ENCODE measurements at regions of chr13 and their contacts with region 1.

Region 1: GRCh38 chr13:23466144-23467002 is 32.9 kb upstream of the SACS start:
- DNase-seq: no peak
- H3K4me3 ChIP-seq: peak overlapping the region; percentile 56
- CTCF ChIP-seq: peak; percentile 57

Region 2: DNA sequence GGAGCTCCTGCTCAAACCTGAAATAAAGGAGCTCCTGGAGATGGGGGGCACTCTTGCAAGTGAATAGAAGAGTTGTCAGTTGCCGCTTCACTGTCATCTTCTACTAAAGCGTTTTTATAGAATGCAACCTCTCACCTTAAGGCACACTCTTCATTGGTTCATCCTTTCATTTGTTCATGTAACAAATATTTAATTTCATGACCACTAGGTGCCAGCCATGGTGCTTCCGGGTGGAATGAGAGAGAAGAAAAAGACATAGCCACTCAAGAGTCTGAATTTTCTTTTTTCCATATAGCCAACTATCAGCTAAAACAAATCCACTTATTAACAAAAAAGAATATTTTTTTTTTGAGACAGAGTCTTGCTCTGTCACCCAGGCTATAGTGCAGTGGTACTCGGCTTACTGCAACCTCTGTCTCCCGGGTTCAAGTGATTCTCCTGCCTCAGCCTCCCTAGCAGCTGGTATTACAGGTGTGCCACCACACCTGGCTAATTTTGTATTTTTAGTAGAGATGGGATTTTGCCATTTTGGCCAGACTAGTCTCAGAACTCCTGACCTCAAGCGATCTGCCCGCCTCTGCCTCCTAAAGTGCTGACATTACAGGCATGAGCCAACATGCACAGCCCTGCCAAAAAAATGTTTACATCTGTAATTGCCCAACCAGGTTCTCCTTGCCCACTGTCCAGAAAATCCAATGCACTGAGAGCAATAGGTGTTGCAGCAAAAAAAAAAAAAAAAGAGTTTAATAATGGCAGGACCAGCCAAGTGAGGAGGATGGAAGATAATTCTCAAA is 10.8 kb before region 1 on chr13:
- CTCF ChIA-PET with region 1: interaction called, 29 read pairs
- POLR2A ChIA-PET with region 1: interaction called, 3 read pairs
- DNase-seq: no peak
- H3K4me3 ChIP-seq: no peak overlapping the region
- CTCF ChIP-seq: no peak

Region 3: GRCh38 chr13:23500849-23501248 is 34.5 kb after region 1 on chr13:
- CTCF ChIA-PET with region 1: interaction called, 4 read pairs
- POLR2A ChIA-PET with region 1: interaction called, 20 read pairs
- DNase-seq: peak; percentile 93
- H3K4me3 ChIP-seq: no peak overlapping the region
- CTCF ChIP-seq: no peak

Region 4: DNA sequence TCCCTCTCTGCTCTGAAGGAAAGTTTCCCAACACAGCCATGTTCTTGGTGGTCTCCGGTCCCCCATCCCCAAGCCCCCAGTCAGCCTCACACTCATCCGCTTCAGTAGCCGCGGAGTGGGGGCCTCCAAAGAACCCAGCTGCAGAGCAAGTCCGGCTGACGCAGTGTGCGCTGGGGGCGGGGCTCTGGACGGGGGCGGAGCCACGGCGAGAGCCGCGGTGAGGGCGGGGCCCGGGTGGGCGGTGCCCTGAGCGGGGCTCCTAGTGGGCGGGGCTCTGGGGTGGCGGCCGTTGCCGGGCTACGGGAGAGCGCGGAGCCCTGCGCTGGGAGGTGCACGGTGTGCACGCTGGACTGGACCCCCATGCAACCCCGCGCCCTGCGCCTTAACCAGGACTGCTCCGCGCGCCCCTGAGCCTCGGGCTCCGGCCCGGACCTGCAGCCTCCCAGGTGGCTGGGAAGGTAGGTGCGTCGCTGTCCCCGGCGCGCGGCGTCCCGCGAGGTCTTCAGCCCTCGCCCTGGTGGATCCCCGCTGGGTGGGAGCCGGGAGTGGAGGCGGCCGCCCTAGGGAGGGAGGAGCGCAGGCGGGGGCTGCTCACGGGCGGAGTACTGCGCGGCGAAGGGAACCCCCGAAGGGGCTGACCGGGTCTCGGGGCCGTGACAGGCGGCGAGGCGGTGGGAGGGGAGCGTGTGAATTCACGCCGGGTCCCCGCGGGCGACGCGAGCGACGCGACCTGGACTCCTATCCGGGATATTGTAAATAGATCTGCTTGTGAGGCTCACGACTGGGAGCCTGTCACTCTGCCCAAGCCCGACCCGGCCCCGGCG is 112.9 kb after region 1 on chr13:
- CTCF ChIA-PET with region 1: interaction called, 15 read pairs
- POLR2A ChIA-PET with region 1: no interaction called
- DNase-seq: no peak
- H3K4me3 ChIP-seq: peak overlapping the region; percentile 88
- CTCF ChIP-seq: no peak

Region 5: DNA sequence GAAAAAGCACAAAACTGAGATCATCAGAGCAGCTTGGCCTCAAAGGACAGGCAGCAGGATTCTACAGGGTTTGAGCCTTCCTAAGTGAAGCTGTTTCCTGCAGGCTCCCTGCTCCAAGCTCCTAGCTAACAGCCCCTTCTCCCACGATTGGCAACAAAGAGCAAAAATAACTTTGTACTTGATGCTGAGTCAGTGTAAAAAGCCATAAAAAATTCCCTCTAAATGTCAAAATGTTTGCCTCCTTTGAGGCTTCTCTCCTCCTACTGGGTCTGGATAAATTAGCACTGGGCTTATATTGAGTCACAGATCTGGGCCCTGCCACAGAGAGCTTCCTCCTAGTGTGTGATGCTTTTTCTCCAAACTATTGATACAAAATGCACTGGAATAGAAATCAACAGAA is 257.1 kb after region 1 on chr13:
- CTCF ChIA-PET with region 1: no interaction called
- POLR2A ChIA-PET with region 1: no interaction called
- DNase-seq: peak; percentile 64
- H3K4me3 ChIP-seq: no peak overlapping the region
- CTCF ChIP-seq: no peak

Region 6: GRCh38 chr13:23888658-23889614 is 422.6 kb after region 1 on chr13 and contains the start of gene MIPEP:
- CTCF ChIA-PET with region 1: interaction called, 36 read pairs
- POLR2A ChIA-PET with region 1: no interaction called
- DNase-seq: peak; percentile 60
- H3K4me3 ChIP-seq: peak within 1 kb of the TSS; percentile 89
- CTCF ChIP-seq: peak; percentile 95

Measured in AG04449 (cell line).